ENCODE measurements at regions of chr2 and their contacts with region 1.

Region 1: DNA sequence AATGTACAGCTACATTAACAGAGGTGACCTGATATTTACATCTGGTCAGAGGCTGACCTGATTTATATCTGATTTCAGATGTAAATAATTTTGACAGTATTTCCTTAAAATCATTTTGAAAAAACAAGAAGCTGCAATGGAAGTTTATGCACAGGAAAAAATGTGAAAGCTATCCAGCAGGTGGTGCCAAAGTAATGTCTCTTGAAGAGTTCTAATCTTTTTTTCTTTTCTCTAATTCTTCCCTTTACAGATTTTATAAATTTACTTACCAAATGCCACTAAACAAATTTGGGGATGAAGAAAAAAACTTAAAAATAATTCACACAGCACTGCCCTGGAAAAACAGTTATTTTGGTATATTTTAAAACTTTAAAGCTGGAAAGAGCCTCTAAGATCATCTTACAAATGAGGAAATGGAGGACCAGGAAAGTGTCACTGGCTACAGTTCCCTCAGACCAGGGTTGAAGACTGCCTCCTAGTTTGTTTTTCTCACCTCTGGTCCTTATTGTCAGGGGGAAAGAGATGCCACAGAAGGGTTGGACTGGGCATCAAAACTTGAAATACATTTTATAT is 16.4 kb upstream of the FBLN7 start:
- DNase-seq: no peak
- ATAC-seq: no peak

Region 2: GRCh38 chr2:112433932-112434730 is 312.4 kb after region 1 on chr2:
- intact Hi-C with region 1: loop called (anchors 5 kb)
- DNase-seq: peak; percentile 33
- ATAC-seq: no peak